CD14-positive monocyte (primary cell): ENCODE measurements at regions of chr9 and their contacts with region 1.

Region 1: DNA sequence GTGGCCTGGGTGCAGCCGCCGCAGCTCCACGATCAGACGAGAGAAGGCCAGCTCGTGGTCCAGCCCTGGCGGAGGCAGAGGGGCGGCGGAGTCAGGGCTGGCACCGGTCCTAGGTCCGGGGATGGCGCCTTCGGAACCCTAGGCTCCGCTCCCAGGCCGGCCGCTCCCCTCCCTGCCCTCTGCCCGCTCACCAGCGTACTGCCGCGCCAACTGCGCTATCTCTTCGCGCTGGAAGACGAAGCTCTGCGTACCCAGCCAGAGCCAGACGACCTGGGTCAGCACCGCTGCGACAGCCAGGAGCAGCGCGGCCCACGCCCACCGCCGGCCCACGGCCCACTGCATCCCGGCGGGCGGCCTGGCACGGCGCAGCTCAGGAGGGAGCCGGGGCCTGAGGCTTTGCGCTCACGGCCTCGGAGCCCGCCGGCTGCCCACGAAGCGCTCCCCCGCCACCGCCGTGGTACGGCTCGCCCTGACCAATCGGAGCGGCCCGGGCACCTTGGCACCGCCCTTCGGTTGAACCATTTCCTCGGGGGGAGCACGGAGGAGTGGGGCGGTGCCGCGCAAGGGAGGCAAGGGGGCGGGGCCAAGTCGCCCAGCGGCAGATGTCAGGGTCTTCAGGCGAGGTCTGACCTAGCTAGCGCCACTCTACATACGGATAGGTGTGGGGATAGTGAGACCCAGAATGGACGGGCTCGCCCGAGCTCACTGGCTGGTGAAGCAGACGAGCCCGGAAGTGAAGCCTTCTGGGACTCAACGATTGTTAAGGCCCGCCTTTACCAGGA is at the start of gene SIGMAR1:
- DNase-seq: peak; percentile 84 to 90 (median 88)
- H3K4me3 ChIP-seq: peak within 1 kb of the TSS; percentile 69 to 91 (median 86)
- H3K4me3 Mint-ChIP-seq: peak within 1 kb of the TSS; percentile 82 to 91
- H3K27ac ChIP-seq: peak within 1 kb of the TSS; percentile 77 to 92
- H3K27ac Mint-ChIP-seq: peak within 1 kb of the TSS; percentile 90 to 96 (median 92)
- H3K4me1 ChIP-seq: peaks cover 28 to 34% of the 10 kb centered on the region in 2 donors
- H3K4me1 Mint-ChIP-seq: peaks cover 34% of the 10 kb centered on the region
- H3K27me3 ChIP-seq: peaks cover 0 to 1% of the 10 kb centered on the region in 2 donors
- H3K27me3 Mint-ChIP-seq: peaks cover 3 to 6% (median 5%) of the 10 kb centered on the region in 3 donors
- CTCF ChIP-seq: no peak
- polyA plus RNA-seq, gene SIGMAR1: 26.6 to 59.6 (median 49.5) TPM

Region 2: GRCh38 chr9:34603610-34604231 is 33.8 kb before region 1 on chr9:
- intact Hi-C with region 1: loop called in 1 of 2 experiments (anchors 5 kb)
- DNase-seq: peak; percentile 49 to 71 (median 68)
- H3K4me3 ChIP-seq: no peak overlapping the region
- H3K4me3 Mint-ChIP-seq: no peak overlapping the region
- H3K27ac ChIP-seq: no peak overlapping the region
- H3K27ac Mint-ChIP-seq: no peak overlapping the region
- H3K4me1 ChIP-seq: no peaks in the 10 kb centered on the region
- H3K4me1 Mint-ChIP-seq: no peaks in the 10 kb centered on the region
- H3K27me3 ChIP-seq: peaks cover 0 to 2% of the 10 kb centered on the region in 2 donors
- H3K27me3 Mint-ChIP-seq: peaks cover 11 to 14% (median 14%) of the 10 kb centered on the region in 3 donors
- CTCF ChIP-seq: peak; percentile 91

Region 3: GRCh38 chr9:34611829-34612630 is 25.5 kb before region 1 on chr9 and contains the start of gene RPP25L:
- intact Hi-C with region 1: loop called in 1 of 2 experiments (anchors 1 kb)
- DNase-seq: peak; percentile 85 to 86 (median 86)
- H3K4me3 ChIP-seq: peak within 1 kb of the TSS; percentile 78 to 91 (median 85)
- H3K4me3 Mint-ChIP-seq: peak within 1 kb of the TSS; percentile 81 to 93
- H3K27ac ChIP-seq: peak within 1 kb of the TSS; percentile 76 to 97
- H3K27ac Mint-ChIP-seq: peak within 1 kb of the TSS; percentile 89 to 96 (median 94)
- H3K4me1 ChIP-seq: peaks cover 24 to 30% of the 10 kb centered on the region in 2 donors
- H3K4me1 Mint-ChIP-seq: peaks cover 27% of the 10 kb centered on the region
- H3K27me3 ChIP-seq: no peaks in the 10 kb centered on the region
- H3K27me3 Mint-ChIP-seq: peaks cover 0 to 4% (median 0%) of the 10 kb centered on the region in 3 donors
- CTCF ChIP-seq: no peak
- polyA plus RNA-seq, gene RPP25L: 20.1 to 42.3 (median 39.4) TPM